ENCODE measurements at regions of chr4 and their contacts with region 1.

Region 1: GRCh38 chr4:159390648-159391047 is 287.8 kb downstream of the RAPGEF2 start:
- DNase-seq: peak; percentile 94
- H3K4me3 ChIP-seq: no peak overlapping the region
- H3K27ac ChIP-seq: peak overlapping the region; percentile 93
- H3K4me1 ChIP-seq: peaks cover 13% of the 10 kb centered on the region
- H3K27me3 ChIP-seq: no peaks in the 10 kb centered on the region
- CTCF ChIP-seq: no peak
- POLR2A ChIP-seq: no peak

Region 2: DNA sequence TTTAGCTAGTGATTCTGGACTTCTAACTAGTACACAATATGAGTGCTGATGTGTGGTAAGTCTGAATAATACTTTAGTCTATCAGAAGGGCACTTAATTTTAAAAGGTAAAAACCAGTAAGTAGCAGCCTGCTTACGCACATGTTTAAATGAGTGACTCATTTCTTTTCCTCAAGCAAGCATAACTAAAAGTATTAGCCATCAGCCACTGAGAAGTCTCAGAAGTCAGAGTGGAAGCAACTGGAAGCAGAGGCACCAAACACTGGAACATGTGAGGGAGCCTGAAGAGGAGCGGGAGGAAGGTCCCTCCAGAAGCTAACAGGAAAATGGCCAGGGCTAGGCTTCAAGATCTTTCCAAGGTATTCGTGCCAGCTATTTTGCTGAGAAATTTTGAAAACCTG is 30.1 kb before region 1 on chr4:
- CTCF ChIA-PET with region 1: interaction called, 3 read pairs
- POLR2A ChIA-PET with region 1: no interaction called
- dilution Hi-C with region 1: no loop called
- intact Hi-C with region 1: loop called (anchors 1 kb)
- DNase-seq: peak; percentile 49
- H3K4me3 ChIP-seq: no peak overlapping the region
- H3K27ac ChIP-seq: peak overlapping the region; percentile 1
- H3K4me1 ChIP-seq: peaks cover 13% of the 10 kb centered on the region
- H3K27me3 ChIP-seq: no peaks in the 10 kb centered on the region
- CTCF ChIP-seq: no peak
- POLR2A ChIP-seq: no peak

Region 3: GRCh38 chr4:159400558-159401225 is 10.0 kb after region 1 on chr4:
- CTCF ChIA-PET with region 1: interaction called, 10 read pairs
- POLR2A ChIA-PET with region 1: no interaction called
- dilution Hi-C with region 1: no loop called
- intact Hi-C with region 1: loop called (anchors 1 kb)
- DNase-seq: no peak
- H3K4me3 ChIP-seq: no peak overlapping the region
- H3K27ac ChIP-seq: no peak overlapping the region
- H3K4me1 ChIP-seq: peaks cover 21% of the 10 kb centered on the region
- H3K27me3 ChIP-seq: no peaks in the 10 kb centered on the region
- CTCF ChIP-seq: no peak
- POLR2A ChIP-seq: no peak

Region 4: DNA sequence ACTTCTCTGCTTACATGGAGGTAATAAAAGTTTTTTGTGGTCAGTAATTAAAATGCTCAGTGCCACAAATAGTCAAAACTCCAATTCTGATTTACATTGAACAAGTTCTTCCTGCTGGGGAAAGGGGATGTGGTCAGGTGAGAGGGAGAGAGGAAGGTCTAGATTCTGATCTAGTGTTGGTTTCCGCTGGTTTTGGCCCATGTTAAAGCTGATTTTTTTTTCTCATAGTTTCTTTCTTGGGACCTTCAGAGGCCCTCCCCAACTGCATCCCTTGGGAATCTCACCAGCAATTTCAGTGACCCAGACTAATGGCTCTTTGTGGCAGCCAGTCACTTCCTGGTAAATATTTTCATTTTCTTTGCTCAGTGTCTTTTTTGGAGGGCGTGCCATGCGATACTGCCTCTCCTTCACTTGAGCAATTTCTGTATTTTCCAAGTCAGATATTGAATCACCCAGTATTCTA is 44.9 kb after region 1 on chr4:
- CTCF ChIA-PET with region 1: no interaction called
- POLR2A ChIA-PET with region 1: no interaction called
- dilution Hi-C with region 1: no loop called
- intact Hi-C with region 1: loop called (anchors 2 kb)
- DNase-seq: peak; percentile 70
- H3K4me3 ChIP-seq: no peak overlapping the region
- H3K27ac ChIP-seq: peak overlapping the region; percentile 59
- H3K4me1 ChIP-seq: peaks cover 18% of the 10 kb centered on the region
- H3K27me3 ChIP-seq: no peaks in the 10 kb centered on the region
- CTCF ChIP-seq: no peak
- POLR2A ChIP-seq: no peak